Right cardiac atrium (tissue), 5 donors: ENCODE measurements at regions of chr10 and their contacts with region 1.

Region 1: GRCh38 chr10:114550756-114551635 is 107.1 kb downstream of the ABLIM1 start:
- DNase-seq: peak; percentile 69 to 85 (median 73)
- ATAC-seq: peak; percentile 47 to 60
- H3K4me3 ChIP-seq: peak overlapping the region; percentile 29
- H3K27ac ChIP-seq: peak overlapping the region; percentile 93
- H3K4me1 ChIP-seq: peaks cover 19% of the 10 kb centered on the region
- H3K27me3 ChIP-seq: no peaks in the 10 kb centered on the region

Region 2: DNA sequence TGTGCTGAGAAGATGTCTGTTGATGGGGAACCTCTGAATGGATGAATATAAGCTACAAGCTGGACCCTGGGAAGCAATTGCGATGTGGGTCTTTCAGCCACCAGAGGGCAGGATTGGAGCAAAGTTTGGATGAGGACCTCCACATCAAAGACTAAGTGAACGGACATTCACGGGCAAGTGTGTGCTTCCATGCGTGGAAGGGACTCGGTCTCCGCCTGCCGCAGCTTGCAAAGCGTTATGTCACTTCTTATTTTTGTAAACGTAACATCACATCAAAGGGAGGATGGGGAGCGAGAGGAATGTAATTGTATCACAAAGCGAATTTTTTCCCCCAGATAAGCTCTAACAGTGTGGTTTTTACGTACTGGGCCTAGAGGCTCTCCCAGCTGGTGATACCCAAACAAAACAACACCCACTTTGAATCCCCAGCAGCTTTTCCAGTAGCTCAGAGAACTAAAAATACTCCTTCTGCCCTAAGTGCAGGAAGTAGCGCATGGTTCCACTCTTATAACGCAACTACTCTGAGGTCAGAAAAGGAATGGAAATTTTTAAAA is 246.9 kb before region 1 on chr10:
- intact Hi-C with region 1: loop called in 1 of 4 experiments (anchors 10 kb)
- DNase-seq: peak; percentile 81 to 91 (median 85)
- ATAC-seq: peak; percentile 81 to 84
- H3K4me3 ChIP-seq: peak overlapping the region; percentile 7
- H3K27ac ChIP-seq: no peak overlapping the region
- H3K4me1 ChIP-seq: peaks cover 5% of the 10 kb centered on the region
- H3K27me3 ChIP-seq: no peaks in the 10 kb centered on the region

Region 3: GRCh38 chr10:114623661-114624294 is 72.8 kb after region 1 on chr10:
- intact Hi-C with region 1: loop called in 2 of 4 experiments (anchors 5 to 10 kb)
- DNase-seq: no peak
- ATAC-seq: peak; percentile 53 to 73
- H3K4me3 ChIP-seq: no peak overlapping the region
- H3K27ac ChIP-seq: peak overlapping the region; percentile 67
- H3K4me1 ChIP-seq: peaks cover 11% of the 10 kb centered on the region
- H3K27me3 ChIP-seq: no peaks in the 10 kb centered on the region

Region 4: GRCh38 chr10:114703377-114704107 is 152.5 kb after region 1 on chr10:
- intact Hi-C with region 1: loop called in 3 of 4 experiments (anchors 5 to 10 kb)
- DNase-seq: no peak
- ATAC-seq: peak; percentile 44 to 52
- H3K4me3 ChIP-seq: no peak overlapping the region
- H3K27ac ChIP-seq: no peak overlapping the region
- H3K4me1 ChIP-seq: peaks cover 2% of the 10 kb centered on the region
- H3K27me3 ChIP-seq: no peaks in the 10 kb centered on the region

Region 5: GRCh38 chr10:114779803-114780609 is 229.0 kb after region 1 on chr10:
- intact Hi-C with region 1: loop called (anchors 5 to 10 kb)
- DNase-seq: no peak
- ATAC-seq: peak; percentile 45 to 78
- H3K4me3 ChIP-seq: no peak overlapping the region
- H3K27ac ChIP-seq: peak overlapping the region; percentile 45
- H3K4me1 ChIP-seq: no peaks in the 10 kb centered on the region
- H3K27me3 ChIP-seq: no peaks in the 10 kb centered on the region